ENCODE measurements at regions of chr6 and their contacts with region 1.

Region 1: DNA sequence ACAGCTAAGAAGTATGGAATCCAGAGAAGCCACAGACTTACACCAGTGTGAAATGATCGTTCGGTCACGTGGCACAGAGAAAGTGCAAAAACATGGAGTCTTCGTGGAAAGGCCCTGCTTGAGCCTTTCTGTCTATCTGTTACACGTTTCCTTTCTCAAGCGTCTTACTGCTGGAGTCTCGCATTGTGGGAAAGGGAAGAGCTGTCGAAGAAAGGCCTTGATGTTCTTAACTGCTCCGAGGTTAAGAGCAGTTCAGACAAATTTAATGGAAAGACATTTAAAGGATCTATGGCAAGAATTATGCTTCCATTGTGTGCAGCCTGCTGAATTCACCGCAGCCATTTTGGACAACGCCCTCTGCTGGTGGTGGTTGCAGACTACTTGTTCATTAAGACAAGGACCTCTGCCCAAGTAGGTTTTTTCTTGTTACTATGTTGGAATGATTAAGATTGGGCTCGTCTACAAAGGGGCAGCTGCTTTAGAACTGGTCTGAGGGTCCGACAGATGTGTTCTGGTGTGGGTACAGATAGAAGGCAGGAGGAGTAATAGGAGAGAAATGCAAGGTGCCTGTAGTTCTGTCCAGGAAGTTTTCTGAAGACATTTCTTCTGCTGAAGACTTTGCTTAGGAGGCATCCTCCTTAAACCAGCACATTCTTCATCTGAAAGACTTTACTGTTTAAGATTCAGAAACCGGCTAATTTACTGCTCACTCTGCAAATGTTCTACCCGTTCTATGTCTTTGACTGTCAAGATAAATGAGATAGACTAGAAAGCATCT is 24.7 kb upstream of the CCN6 start:
- DNase-seq: peak; percentile 77
- H3K4me3 ChIP-seq: no peak overlapping the region
- H3K27ac ChIP-seq: no peak overlapping the region
- H3K4me1 ChIP-seq: no peaks in the 10 kb centered on the region
- H3K27me3 ChIP-seq: peaks cover 0 to 2% of the 10 kb centered on the region in 2 experiments
- CTCF ChIP-seq: peak; percentile 72 to 87
- POLR2A ChIP-seq: no peak

Region 2: GRCh38 chr6:111534231-111534751 is 494.9 kb before region 1 on chr6:
- CTCF ChIA-PET with region 1: no interaction called
- POLR2A ChIA-PET with region 1: no interaction called
- dilution Hi-C with region 1: no loop called
- intact Hi-C with region 1: no loop called
- DNase-seq: peak; percentile 93
- H3K4me3 ChIP-seq: no peak overlapping the region
- H3K27ac ChIP-seq: no peak overlapping the region
- H3K4me1 ChIP-seq: peaks cover 15% of the 10 kb centered on the region
- H3K27me3 ChIP-seq: no peaks in the 10 kb centered on the region
- CTCF ChIP-seq: no peak
- POLR2A ChIP-seq: no peak

Region 3: GRCh38 chr6:112010328-112010727 is 18.9 kb before region 1 on chr6:
- CTCF ChIA-PET with region 1: interaction called, 6 read pairs
- POLR2A ChIA-PET with region 1: no interaction called
- dilution Hi-C with region 1: no loop called
- intact Hi-C with region 1: loop called (anchors 2 kb)
- DNase-seq: no peak
- H3K4me3 ChIP-seq: no peak overlapping the region
- H3K27ac ChIP-seq: no peak overlapping the region
- H3K4me1 ChIP-seq: peaks cover 9% of the 10 kb centered on the region
- H3K27me3 ChIP-seq: no peaks in the 10 kb centered on the region
- CTCF ChIP-seq: no peak
- POLR2A ChIP-seq: no peak

Region 4: GRCh38 chr6:112018619-112019416 is 10.4 kb before region 1 on chr6:
- CTCF ChIA-PET with region 1: interaction called, 10 read pairs
- POLR2A ChIA-PET with region 1: no interaction called
- dilution Hi-C with region 1: no loop called
- intact Hi-C with region 1: loop called (anchors 2 kb)
- DNase-seq: peak; percentile 63
- H3K4me3 ChIP-seq: no peak overlapping the region
- H3K27ac ChIP-seq: no peak overlapping the region
- H3K4me1 ChIP-seq: peaks cover 16% of the 10 kb centered on the region
- H3K27me3 ChIP-seq: no peaks in the 10 kb centered on the region
- CTCF ChIP-seq: no peak
- POLR2A ChIP-seq: no peak